Activated CD4-positive, alpha-beta T cell treated with anti-CD3 and anti-CD28 coated beads for 36 hours (primary cell): ENCODE measurements at regions of chr1 and their contacts with region 1.

Region 1: DNA sequence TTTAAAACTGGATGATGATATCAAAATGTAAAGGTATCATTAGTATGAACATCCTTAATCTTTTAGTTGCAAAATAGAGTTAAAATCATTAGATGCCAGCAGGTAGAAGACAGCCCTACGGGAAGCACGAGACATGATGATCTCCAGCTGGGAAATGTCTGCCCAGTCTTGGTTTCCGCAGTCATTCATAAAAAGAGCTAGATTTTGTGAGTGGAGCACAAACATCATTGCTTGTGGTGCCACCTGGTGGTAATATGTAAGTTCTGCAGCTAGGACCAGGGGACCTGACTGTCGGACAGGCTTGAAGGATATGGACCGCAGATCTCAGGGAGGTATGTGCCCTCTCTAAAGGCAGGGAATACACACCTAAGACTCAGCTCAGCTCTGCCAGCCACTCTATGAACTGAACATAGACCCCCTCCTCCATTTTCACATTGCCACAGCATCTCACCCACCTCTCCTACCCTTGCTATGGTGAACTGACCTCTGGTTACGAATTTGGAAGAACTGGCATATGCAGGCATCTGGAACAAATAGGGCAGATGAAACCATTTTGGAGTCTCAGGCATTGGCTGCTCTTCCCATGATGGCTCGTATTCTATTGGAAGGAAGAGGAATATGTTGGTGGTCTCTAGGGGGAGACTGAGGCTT is 9.2 kb downstream of the FCMR start:
- DNase-seq: peak; percentile 76
- ATAC-seq: peak; percentile 39
- H3K4me3 Mint-ChIP-seq: no peak overlapping the region
- H3K27ac Mint-ChIP-seq: no peak overlapping the region
- H3K4me1 Mint-ChIP-seq: peaks cover 88% of the 10 kb centered on the region
- H3K27me3 Mint-ChIP-seq: no peaks in the 10 kb centered on the region

Region 2: GRCh38 chr1:206608108-206608698 is 304.4 kb before region 1 on chr1:
- CTCF ChIA-PET with region 1: no interaction called
- POLR2A ChIA-PET with region 1: no interaction called
- intact Hi-C with region 1: no loop called
- DNase-seq: peak; percentile 84
- ATAC-seq: no peak
- H3K4me3 Mint-ChIP-seq: peak overlapping the region; percentile 56
- H3K27ac Mint-ChIP-seq: peak overlapping the region; percentile 90
- H3K4me1 Mint-ChIP-seq: peaks cover 46% of the 10 kb centered on the region
- H3K27me3 Mint-ChIP-seq: no peaks in the 10 kb centered on the region

Region 3: GRCh38 chr1:206635080-206635977 is 277.2 kb before region 1 on chr1 and contains the start of gene DYRK3:
- CTCF ChIA-PET with region 1: interaction called, 6 read pairs
- POLR2A ChIA-PET with region 1: no interaction called
- intact Hi-C with region 1: loop called in 1 of 2 experiments (anchors 1 kb)
- DNase-seq: peak; percentile 97
- ATAC-seq: peak; percentile 93
- H3K4me3 Mint-ChIP-seq: peak within 1 kb of the TSS; percentile 76
- H3K27ac Mint-ChIP-seq: peak within 1 kb of the TSS; percentile 87
- H3K4me1 Mint-ChIP-seq: peaks cover 27% of the 10 kb centered on the region
- H3K27me3 Mint-ChIP-seq: peaks cover 7% of the 10 kb centered on the region
- total RNA-seq, gene DYRK3: 8.3 to 8.7 TPM

Region 4: DNA sequence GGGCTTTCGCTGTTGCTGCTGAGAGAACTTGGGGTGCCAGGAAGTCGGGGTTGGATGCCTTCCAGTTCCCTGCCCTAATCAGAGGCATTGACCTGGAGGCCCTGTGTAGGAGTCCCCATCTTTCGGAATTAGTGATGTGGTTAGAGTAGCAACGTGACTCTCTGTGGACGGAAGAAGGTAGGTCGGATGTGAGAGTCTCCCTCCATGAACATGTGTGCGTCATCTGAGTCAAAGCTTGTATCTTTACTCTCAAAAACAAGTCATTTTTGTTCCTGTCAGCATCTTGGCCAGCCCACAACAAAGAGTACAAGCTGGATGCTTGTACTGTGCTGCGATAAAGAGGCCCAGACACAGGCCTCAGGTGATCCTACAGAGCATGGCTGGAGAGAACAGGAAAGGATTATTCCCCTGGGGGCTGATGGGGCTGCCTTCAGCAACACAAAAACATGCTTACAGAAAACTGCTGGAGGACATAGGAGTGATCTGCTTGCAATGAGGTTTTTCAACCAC is 109.3 kb before region 1 on chr1:
- CTCF ChIA-PET with region 1: interaction called, 29 read pairs
- POLR2A ChIA-PET with region 1: interaction called, 3 read pairs
- intact Hi-C with region 1: no loop called
- DNase-seq: peak; percentile 87
- ATAC-seq: peak; percentile 91
- H3K4me3 Mint-ChIP-seq: peak overlapping the region; percentile 0
- H3K27ac Mint-ChIP-seq: peak overlapping the region; percentile 77
- H3K4me1 Mint-ChIP-seq: peaks cover 67% of the 10 kb centered on the region
- H3K27me3 Mint-ChIP-seq: peaks cover 21% of the 10 kb centered on the region

Region 5: GRCh38 chr1:206856674-206857464 is 55.7 kb before region 1 on chr1:
- CTCF ChIA-PET with region 1: interaction called, 306 read pairs
- POLR2A ChIA-PET with region 1: no interaction called
- intact Hi-C with region 1: loop called in 1 of 2 experiments (anchors 2 kb)
- DNase-seq: peak; percentile 39
- ATAC-seq: peak; percentile 81
- H3K4me3 Mint-ChIP-seq: no peak overlapping the region
- H3K27ac Mint-ChIP-seq: no peak overlapping the region
- H3K4me1 Mint-ChIP-seq: peaks cover 19% of the 10 kb centered on the region
- H3K27me3 Mint-ChIP-seq: peaks cover 9% of the 10 kb centered on the region

Region 6: GRCh38 chr1:206890690-206891089 is 21.9 kb before region 1 on chr1:
- CTCF ChIA-PET with region 1: interaction called, 30 read pairs
- POLR2A ChIA-PET with region 1: no interaction called
- intact Hi-C with region 1: loop called in 1 of 2 experiments (anchors 2 kb)
- DNase-seq: no peak
- ATAC-seq: no peak
- H3K4me3 Mint-ChIP-seq: peak overlapping the region; percentile 16
- H3K27ac Mint-ChIP-seq: peak overlapping the region; percentile 79
- H3K4me1 Mint-ChIP-seq: peaks cover 66% of the 10 kb centered on the region
- H3K27me3 Mint-ChIP-seq: peaks cover 2% of the 10 kb centered on the region

Region 7: DNA sequence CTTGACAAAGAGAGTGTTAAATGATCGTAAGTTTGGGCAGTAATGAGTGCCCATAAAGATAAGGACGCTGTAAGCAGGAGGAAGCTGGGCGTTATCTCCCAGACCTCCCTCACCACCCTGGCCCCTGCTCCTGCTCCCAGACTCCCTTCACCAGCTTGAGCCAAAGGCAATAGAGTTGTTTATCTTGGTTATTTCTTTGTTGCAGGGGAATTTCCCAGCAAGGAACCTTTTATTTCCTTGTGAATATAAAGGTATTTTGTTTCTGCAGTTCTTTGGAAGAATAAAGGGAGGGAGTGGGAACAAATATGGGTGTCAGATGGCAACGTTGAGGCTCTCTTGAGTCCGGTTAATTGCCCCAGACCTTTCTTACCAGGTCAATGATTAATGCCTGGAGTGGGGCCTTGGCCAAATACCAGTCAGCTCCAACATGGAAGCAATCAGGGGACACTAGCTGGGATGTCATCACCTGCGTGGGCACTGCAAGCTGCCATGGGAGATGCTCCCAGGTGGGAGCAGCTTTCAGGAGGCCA is 29.4 kb after region 1 on chr1:
- CTCF ChIA-PET with region 1: interaction called, 12 read pairs
- POLR2A ChIA-PET with region 1: no interaction called
- intact Hi-C with region 1: no loop called
- DNase-seq: no peak
- ATAC-seq: no peak
- H3K4me3 Mint-ChIP-seq: no peak overlapping the region
- H3K27ac Mint-ChIP-seq: no peak overlapping the region
- H3K4me1 Mint-ChIP-seq: no peaks in the 10 kb centered on the region
- H3K27me3 Mint-ChIP-seq: peaks cover 5% of the 10 kb centered on the region